SK-N-SH (cell line): ENCODE measurements at regions of chr16 and their contacts with region 1.

Region 1: DNA sequence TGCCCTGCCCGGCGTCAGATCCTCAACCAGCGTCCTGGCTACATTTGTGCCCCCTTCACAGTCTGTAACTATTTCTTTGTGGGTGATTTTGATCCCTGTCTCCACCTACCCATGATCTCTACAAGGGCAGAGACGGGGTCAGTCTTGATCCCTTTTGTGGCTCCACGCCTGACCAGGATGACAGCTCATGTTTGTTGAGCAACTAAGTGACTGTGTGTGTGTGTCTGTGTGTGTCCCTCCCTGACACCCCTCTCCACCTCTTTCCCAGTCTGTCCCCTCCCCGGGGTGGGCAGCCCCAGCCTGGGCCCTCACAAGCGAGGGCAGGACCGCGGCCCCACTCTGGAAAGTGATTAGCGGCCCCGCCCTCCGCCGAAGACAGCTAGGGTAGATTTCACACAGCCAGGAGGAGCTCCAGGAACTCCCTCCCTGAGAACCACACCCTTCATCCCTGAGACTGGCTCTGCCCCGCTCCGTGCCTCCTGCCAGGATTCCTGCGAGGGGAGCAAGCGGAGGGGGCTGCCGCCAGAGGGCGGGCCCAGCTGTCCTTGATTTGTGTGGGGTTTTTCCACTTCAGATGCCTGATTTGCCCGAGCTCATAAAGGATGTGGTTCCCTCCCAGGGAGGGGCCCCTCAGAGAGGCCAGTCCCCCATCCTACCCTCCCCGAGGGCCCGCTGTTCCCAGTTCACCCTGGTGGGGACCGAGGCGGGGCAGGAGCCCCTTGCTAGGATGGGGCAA is 5.3 kb upstream of the HS3ST6 start:
- DNase-seq: peak; percentile 58
- H3K4me3 ChIP-seq: no peak overlapping the region
- H3K27ac ChIP-seq: no peak overlapping the region
- H3K4me1 ChIP-seq: peaks cover 0 to 13% of the 10 kb centered on the region in 2 experiments; a peak in 1 of 4 replicates
- H3K27me3 ChIP-seq: peaks cover 24% of the 10 kb centered on the region
- CTCF ChIP-seq: peak; percentile 39
- EP300 ChIP-seq: no peak
- RAD21 ChIP-seq: no peak

Region 2: GRCh38 chr16:1526608-1527555 is 396.6 kb before region 1 on chr16:
- CTCF ChIA-PET with region 1: no interaction called
- POLR2A ChIA-PET with region 1: no interaction called
- DNase-seq: no peak
- H3K4me3 ChIP-seq: no peak overlapping the region
- H3K27ac ChIP-seq: no peak overlapping the region
- H3K4me1 ChIP-seq: peaks cover 5 to 28% of the 10 kb centered on the region in 2 experiments; a peak in 2 of 4 replicates
- H3K27me3 ChIP-seq: no peaks in the 10 kb centered on the region
- CTCF ChIP-seq: no peak
- EP300 ChIP-seq: no peak
- RAD21 ChIP-seq: no peak

Region 3: GRCh38 chr16:1667251-1667650 is 256.2 kb before region 1 on chr16:
- CTCF ChIA-PET with region 1: no interaction called
- POLR2A ChIA-PET with region 1: no interaction called
- DNase-seq: no peak
- H3K4me3 ChIP-seq: no peak overlapping the region
- H3K27ac ChIP-seq: no peak overlapping the region
- H3K4me1 ChIP-seq: no peaks in the 10 kb centered on the region
- H3K27me3 ChIP-seq: no peaks in the 10 kb centered on the region
- CTCF ChIP-seq: no peak
- EP300 ChIP-seq: no peak
- RAD21 ChIP-seq: no peak

Region 4: GRCh38 chr16:1863681-1864460 is 59.6 kb before region 1 on chr16:
- CTCF ChIA-PET with region 1: interaction called, 137 read pairs
- POLR2A ChIA-PET with region 1: interaction called, 3 read pairs
- DNase-seq: peak; percentile 44
- H3K4me3 ChIP-seq: no peak overlapping the region
- H3K27ac ChIP-seq: no peak overlapping the region
- H3K4me1 ChIP-seq: no peaks in the 10 kb centered on the region; a peak in 1 of 4 replicates
- H3K27me3 ChIP-seq: no peaks in the 10 kb centered on the region; the same call in 1 of the 2 replicates
- CTCF ChIP-seq: peak; percentile 60
- EP300 ChIP-seq: no peak
- RAD21 ChIP-seq: peak; percentile 70

Region 5: DNA sequence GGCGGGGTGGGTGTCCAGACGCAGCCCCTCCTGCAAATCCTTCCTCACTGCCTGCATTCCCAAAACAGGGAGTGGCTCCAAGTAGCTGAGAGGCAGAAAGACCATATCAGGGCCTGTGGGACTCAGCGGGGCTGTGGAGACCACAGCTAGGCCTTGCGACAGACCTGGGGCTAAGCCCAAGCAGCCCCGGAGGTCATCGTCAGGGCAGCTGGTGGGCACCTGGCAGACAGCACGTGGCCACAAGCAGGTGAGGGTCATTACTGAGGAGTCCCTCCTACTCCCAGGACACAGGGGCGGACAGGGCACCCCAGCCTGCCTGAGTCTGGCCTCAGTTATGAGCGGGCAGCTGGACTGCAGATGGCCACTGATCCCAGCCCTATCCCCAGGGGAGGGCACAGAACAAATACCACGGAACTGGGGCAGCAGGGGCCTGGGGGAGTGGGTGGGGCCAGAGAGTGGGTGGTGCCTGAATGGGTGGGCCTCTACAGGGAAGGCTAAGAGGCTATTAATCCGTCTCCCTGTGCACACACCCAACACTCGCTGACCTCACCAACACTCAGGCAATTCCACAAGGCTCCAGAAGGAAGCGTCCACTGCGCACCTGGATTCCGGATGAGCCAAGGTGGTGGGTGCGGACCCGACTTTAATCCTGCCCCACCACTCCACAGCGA is 13.8 kb before region 1 on chr16:
- CTCF ChIA-PET with region 1: interaction called, 10 read pairs
- POLR2A ChIA-PET with region 1: no interaction called
- DNase-seq: peak; percentile 81
- H3K4me3 ChIP-seq: no peak overlapping the region
- H3K27ac ChIP-seq: no peak overlapping the region; a peak in 1 of 4 replicates
- H3K4me1 ChIP-seq: peaks cover 0 to 11% of the 10 kb centered on the region in 2 experiments; a peak in 1 of 4 replicates
- H3K27me3 ChIP-seq: no peaks in the 10 kb centered on the region
- CTCF ChIP-seq: no peak
- EP300 ChIP-seq: no peak
- RAD21 ChIP-seq: no peak